Dorsolateral prefrontal cortex (tissue), 120 donors: ENCODE measurements at regions of chr4 and their contacts with region 1.

Region 1: DNA sequence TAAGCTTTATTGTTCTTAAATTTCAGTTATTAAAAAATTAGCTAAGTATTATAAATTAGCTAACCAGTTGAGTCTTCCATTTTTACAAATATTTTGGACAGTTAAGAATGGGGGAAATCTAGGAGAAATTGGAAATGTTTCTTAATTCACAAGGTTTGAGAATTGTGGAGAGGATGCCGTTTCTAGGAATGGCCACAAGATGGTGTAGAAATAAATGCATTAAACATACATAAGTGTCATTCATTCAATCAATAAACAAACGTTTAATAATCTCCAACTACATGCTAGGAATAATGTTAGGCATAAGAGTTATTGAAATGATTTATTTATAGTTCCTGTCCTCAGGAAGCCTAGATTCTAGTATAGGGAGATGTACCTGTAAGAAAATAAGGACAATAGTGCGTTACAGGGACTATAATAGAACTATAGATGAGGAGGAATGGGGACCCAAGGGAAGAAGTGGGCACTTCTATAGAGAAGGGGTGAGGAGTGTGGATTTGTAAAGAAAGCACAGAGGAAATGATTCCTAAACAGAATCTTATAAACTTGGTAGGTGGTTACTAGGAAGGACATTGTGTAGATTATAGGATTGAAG is 195.7 kb upstream of the ANK2 start:
- DNase-seq: no peak
- H3K4me3 ChIP-seq: no peak overlapping the region
- H3K27ac ChIP-seq: peak overlapping the region in 56 of 59 donors; percentile 40 to 96 (median 86)
- H3K27me3 ChIP-seq: no peaks in the 10 kb centered on the region
- CTCF ChIP-seq: peak; percentile 35 to 85 (median 66)

Region 2: DNA sequence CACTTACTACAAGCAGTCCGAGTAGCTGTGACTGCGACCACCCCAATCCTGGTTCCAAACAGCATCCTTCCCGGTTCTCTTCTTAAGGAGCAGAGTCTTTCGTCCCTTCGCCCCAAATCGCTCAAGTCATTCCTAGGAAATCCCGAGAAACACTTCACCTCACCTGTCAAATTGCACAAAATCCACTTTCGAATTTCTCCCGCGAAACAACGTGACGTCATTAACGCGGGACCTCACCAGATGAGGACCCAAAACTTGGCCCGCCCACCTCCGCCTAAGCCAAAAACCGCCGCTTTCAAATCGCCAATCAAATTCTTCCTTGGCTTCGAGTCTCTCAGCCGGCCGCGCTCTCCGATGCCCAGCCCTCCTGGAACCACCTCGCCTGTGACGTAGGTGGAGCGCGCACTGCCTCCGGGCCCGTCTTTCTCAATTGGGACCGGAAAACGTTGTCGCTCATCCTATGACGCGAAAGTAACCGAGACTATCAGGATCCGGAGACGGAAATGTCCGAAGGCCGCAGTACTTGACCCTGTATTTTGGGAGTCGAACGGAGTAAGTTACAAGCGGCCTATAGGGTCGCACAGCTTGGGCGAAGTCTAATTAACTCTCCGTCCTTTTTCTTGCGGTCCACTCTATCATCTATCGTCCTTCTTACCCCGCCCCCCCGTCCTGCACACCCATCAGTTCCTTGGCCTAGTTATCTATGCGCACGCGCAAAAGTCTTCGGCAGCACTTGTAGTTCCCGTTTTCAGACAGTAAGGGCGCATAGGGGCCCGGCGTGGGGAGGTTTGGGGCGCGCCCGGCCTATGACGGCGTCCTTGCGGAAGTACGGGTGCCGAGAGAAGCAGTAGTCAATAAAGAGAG is 216.8 kb before region 1 on chr4 and contains the starts of genes LARP7 and ZGRF1:
- intact Hi-C with region 1: loop called in 1 of 2 experiments (anchors 10 kb)
- DNase-seq: peak; percentile 93 to 99 (median 98)
- H3K4me3 ChIP-seq: peak within 1 kb of the TSS; percentile 49 to 96 (median 78)
- H3K27ac ChIP-seq: peak within 1 kb of the TSS; percentile 86 to 100 (median 98)
- H3K27me3 ChIP-seq: no peaks in the 10 kb centered on the region
- CTCF ChIP-seq: peak; percentile 37 to 99 (median 82)
- total RNA-seq, gene LARP7: 20.0 to 45.1 (median 31.6) TPM
- total RNA-seq, gene ZGRF1: 6.6 to 28.0 (median 14.5) TPM

Region 3: DNA sequence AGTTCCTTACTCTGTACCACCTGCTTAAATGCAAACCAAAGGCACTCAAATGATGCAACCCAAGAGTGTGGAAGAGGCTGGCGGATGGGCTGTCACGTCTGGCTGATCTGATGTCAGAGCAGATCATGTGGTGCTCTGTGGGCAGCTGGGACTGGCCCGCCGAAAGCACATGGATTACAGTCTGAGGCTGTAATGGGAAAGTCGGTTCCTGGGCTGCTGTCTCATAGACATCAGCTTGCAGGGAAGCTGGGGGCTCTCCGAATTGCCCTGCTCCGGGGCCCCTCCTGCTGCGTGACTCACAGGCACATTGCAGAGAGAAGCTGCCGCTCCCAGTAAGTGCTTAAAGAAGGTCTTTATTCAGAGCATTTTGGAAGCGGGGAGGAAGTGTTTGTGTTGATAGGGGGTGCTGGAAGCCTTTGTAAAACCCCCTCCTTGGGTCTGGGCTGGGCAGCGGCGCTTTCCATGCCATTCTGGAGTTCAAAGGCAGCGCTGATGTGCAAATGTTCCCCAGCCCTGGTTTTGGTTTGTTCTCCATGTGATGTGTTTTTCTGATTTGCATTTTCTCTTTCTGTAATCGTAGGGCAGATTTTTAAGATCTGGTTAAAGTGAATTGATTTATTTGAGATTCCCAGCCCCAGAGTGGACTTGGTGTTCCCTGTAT is 35.7 kb before region 1 on chr4:
- intact Hi-C with region 1: loop called in 1 of 2 experiments (anchors 5 kb)
- DNase-seq: peak; percentile 54 to 97 (median 93)
- H3K4me3 ChIP-seq: peak overlapping the region; percentile 48 to 90 (median 75)
- H3K27ac ChIP-seq: peak overlapping the region; percentile 54 to 96 (median 89)
- H3K27me3 ChIP-seq: no peaks in the 10 kb centered on the region
- CTCF ChIP-seq: peak in 41 of 56 donors; percentile 7 to 67 (median 35)

Region 4: DNA sequence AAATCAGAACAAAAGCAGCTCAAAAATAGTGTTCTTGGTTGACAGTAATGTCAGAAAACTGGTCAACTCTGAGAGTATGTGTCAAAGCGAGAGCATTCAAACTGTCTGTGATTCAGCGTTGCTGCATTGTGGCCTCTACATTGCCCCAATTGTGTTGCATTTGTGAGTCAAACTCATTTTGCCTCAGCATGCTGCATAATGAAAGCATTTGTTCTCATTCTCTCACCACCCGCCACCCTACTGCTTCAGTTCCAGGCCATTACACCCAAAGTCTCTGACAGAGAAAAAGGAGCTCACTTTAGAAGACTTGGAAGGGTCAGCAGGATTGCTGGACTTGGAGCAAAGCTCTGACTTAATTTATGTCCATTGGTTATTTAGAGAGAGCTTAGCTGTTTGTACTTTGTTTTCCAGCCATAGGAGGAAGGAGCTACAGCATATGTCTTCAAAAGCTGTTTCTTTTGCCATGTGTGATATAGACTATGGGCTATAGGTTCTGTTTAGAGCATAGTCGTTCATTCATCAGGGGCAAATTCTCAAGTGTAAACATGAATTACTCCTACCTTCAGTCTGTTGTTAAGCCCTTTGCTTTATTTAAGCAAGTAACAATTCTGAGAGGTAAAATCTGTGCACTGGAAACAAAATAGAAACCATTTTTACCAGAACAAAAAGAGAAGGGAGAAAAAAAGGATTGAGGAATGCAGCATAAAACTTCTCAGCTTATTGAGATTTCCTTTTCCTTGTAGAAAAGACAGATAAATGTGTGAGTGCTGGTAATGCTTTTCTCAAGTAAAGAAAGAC is 42.3 kb after region 1 on chr4:
- intact Hi-C with region 1: loop called (anchors 5 kb)
- DNase-seq: peak in 6 of 10 donors; percentile 30 to 72 (median 57)
- H3K4me3 ChIP-seq: peak overlapping the region in 13 of 59 donors; percentile 4 to 37 (median 16)
- H3K27ac ChIP-seq: peak overlapping the region; percentile 77 to 98 (median 92)
- H3K27me3 ChIP-seq: no peaks in the 10 kb centered on the region
- CTCF ChIP-seq: peak in 3 of 56 donors; percentile 10 to 13 (median 11)

Region 5: GRCh38 chr4:112938461-112939058 is 84.8 kb after region 1 on chr4:
- intact Hi-C with region 1: loop called (anchors 1 to 5 kb)
- DNase-seq: no peak
- H3K4me3 ChIP-seq: no peak overlapping the region
- H3K27ac ChIP-seq: peak overlapping the region in 45 of 59 donors; percentile 6 to 76 (median 52)
- H3K27me3 ChIP-seq: no peaks in the 10 kb centered on the region
- CTCF ChIP-seq: peak; percentile 58 to 98 (median 85)

Region 6: DNA sequence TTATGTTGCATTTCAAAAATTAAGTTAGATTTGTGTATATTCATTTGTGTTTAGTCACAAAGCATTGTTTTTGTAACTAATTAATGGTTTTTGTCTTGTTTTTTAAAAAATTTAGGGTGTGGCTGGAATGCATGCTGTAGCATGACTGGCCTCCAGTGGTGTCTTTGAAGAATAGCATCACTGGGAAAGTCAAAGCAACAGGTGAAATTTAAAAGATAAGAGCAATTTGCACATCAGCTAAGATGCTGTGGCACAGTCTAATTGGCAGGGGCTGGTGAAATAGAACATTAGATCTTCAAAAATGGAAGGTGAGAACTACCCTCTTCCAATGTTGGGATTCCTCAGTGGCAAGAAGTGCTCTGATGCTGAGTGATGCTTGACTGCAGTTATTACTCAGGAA is 241.0 kb after region 1 on chr4:
- intact Hi-C with region 1: loop called in 1 of 2 experiments (anchors 10 kb)
- DNase-seq: no peak
- H3K4me3 ChIP-seq: peak overlapping the region in 6 of 59 donors; percentile 7 to 21 (median 11)
- H3K27ac ChIP-seq: peak overlapping the region in 38 of 59 donors; percentile 1 to 74 (median 40)
- H3K27me3 ChIP-seq: no peaks in the 10 kb centered on the region
- CTCF ChIP-seq: peak; percentile 57 to 95 (median 82)

Region 7: GRCh38 chr4:113499696-113500095 is 645.9 kb after region 1 on chr4:
- intact Hi-C with region 1: no loop called
- DNase-seq: no peak
- H3K4me3 ChIP-seq: no peak overlapping the region
- H3K27ac ChIP-seq: no peak overlapping the region
- H3K27me3 ChIP-seq: no peaks in the 10 kb centered on the region
- CTCF ChIP-seq: no peak